Activated CD8-positive, alpha-beta T cell treated with anti-CD3 and anti-CD28 coated beads, Interleukin-2, amount 10 ng/mL, durations not matched to agents 7 days and 5 days (primary cell): ENCODE measurements at regions of chr1 and their contacts with region 1.

Region 1: DNA sequence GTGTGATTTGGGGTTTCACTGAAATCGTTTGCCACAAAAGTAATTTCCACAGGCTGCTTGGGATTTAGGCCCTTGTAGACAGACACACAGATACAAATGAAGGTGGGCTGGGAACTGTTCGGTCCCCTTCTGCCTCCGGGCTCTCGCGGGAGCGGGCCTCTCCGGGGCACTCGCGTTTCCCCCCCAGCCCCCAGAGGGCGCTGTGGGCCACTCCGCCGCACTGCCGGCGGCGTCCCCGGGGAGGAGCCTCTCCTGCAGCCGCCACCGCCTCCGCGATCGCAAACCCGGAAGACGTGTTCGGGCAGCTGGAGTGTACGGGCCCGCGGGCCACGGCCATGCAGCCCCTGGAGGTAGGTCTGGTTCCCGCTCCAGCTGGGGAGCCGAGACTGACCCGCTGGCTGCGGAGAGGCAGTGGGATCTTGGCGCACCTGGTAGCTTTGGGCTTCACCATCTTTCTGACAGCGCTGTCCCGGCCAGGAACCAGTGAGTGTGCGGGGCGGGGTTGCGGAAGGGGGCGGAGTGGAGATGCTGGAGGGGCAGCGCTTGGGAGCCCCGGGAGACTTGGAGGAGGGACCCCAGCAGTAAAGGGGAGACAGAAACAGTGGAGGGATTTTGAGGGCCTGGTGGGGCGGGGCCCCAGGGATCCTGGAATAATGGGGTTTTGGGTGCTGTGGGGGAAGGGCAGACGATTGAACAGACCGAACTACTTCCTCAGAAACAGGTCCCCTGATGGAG is at the start of gene CYB561D1:
- DNase-seq: peak; percentile 91
- ATAC-seq: peak; percentile 91
- H3K4me3 Mint-ChIP-seq: peak within 1 kb of the TSS; percentile 97
- H3K27ac Mint-ChIP-seq: peak within 1 kb of the TSS; percentile 87
- H3K4me1 Mint-ChIP-seq: peaks cover 56% of the 10 kb centered on the region
- H3K27me3 Mint-ChIP-seq: no peaks in the 10 kb centered on the region
- total RNA-seq, gene CYB561D1: 19.0 to 19.8 TPM

Region 2: DNA sequence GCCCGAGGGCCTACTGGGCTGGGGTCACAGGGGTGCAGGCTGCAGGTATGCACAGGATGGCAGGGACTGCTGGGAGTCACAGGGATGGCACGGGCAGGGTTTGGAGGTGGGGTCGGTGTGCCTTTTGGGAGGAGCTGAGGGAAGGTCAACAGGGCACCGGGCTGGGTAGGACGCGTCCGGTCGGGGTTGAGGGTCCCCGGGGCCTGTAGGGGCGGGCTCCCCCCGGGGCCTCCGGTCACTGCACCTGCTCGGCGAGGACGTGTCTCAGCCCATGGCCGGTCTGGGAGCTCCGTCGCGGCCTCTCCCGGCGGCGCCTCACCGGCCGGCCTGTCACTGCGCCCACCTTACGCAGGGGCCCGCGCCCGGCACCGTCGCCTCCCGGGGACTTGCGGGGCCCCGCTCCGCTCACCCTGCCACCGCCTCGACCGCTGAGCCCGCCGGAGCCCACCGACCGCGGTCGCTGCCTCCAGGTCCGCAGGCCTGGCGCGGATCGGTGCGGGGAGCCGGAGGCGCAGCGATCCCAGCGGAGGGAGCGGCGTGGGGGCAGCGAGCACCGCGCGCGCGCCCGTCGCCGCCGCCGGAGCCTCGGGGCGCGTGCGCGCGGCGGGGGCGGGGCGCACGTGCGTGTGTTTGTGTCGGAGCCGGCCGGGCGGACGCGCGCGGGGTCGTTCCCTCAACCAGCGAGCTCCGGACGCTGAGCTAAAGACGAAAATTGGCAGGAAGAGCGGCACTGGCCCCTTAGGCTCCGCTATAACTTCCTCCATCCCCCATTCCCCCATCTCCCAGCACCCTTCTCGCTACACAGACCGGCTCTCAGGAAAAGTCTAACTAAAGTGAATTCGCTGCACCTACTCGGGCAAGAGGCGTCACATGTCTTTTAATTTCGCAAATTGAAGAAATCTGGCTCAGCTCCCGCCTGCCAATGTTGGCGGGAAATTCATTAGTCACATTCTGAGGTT is 15.5 kb after region 1 on chr1 and contains the start of gene AMIGO1:
- CTCF ChIA-PET with region 1: interaction called, 480 read pairs
- POLR2A ChIA-PET with region 1: no interaction called
- DNase-seq: peak; percentile 61
- ATAC-seq: peak; percentile 70
- H3K4me3 Mint-ChIP-seq: peak within 1 kb of the TSS; percentile 79
- H3K27ac Mint-ChIP-seq: peak within 1 kb of the TSS; percentile 68
- H3K4me1 Mint-ChIP-seq: peaks cover 39% of the 10 kb centered on the region
- H3K27me3 Mint-ChIP-seq: peaks cover 12% of the 10 kb centered on the region
- total RNA-seq, gene AMIGO1: 1.6 to 2.2 TPM